Ovary (tissue), 10 donors: ENCODE measurements at regions of chr22 and their contacts with region 1.

Region 1: GRCh38 chr22:38347897-38348750 is 30.9 kb upstream of the CSNK1E start:
- DNase-seq: peak in 1 of 5 donors; percentile 19
- H3K4me3 ChIP-seq: no peak overlapping the region
- H3K27ac ChIP-seq: no peak overlapping the region
- H3K4me1 ChIP-seq: no peaks in the 10 kb centered on the region
- H3K27me3 ChIP-seq: no peaks in the 10 kb centered on the region
- CTCF ChIP-seq: no peak
- EP300 ChIP-seq: no peak
- POLR2A ChIP-seq: no peak

Region 2: GRCh38 chr22:37109242-37109917 is 1238.7 kb before region 1 on chr22 and contains the start of gene TMPRSS6:
- intact Hi-C with region 1: no loop called
- DNase-seq: no peak
- H3K4me3 ChIP-seq: no peak within 1 kb of the TSS
- H3K27ac ChIP-seq: no peak within 1 kb of the TSS
- H3K4me1 ChIP-seq: no peaks in the 10 kb centered on the region
- H3K27me3 ChIP-seq: no peaks in the 10 kb centered on the region
- CTCF ChIP-seq: no peak
- EP300 ChIP-seq: no peak
- POLR2A ChIP-seq: no peak
- total RNA-seq, gene TMPRSS6: 0.33 to 2.4 TPM in 2 of 7 donors, not detected in the others

Region 3: DNA sequence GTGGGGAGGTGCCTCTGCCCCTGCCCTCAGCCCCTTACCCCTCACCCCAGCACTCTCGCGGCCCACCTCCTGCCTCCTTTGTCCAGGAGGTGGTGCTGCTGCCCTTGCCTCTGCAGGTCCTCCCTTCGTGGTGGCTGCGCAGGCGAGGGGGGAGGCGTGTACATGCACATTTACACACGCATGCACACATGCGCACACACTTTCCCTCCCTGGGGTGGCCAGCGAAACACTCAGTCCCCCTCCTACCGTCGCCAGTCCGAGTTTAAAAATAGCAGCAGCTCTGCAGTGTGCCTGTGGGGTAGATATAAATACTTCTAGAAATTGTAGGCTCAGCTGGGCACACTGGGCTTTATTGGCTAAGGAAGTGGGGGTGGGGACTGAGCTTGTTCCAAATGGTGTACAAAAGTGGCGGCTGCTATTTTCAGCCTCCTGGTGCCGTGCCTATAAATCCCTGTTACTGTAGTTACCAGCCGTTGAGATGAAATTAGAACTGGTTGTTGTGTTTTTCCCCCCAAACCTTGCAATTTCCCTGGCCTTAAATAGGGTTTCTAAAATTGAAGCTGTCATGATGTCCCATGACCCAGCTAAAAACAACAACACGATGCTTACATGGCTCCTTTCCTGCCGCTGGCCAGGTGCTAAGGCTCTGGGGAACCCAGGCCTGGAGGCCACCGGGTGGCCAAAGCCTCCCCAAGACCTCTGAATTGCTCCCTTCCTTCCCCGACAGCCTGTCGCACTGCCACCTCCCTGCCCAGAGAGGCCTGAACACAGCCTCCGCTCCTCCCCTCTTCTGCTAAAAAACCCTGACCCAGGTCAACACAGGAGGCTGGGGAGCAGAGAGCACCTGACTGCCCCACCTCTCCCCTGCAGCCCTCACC is 278.5 kb before region 1 on chr22:
- intact Hi-C with region 1: loop called in 1 of 4 experiments (anchors 10 kb)
- DNase-seq: peak in 3 of 5 donors; percentile 48 to 62 (median 52)
- H3K4me3 ChIP-seq: no peak overlapping the region
- H3K27ac ChIP-seq: peak overlapping the region in 1 of 2 donors; percentile 50
- H3K4me1 ChIP-seq: no peaks in the 10 kb centered on the region
- H3K27me3 ChIP-seq: no peaks in the 10 kb centered on the region
- CTCF ChIP-seq: peak in 1 of 3 donors; percentile 20
- EP300 ChIP-seq: no peak
- POLR2A ChIP-seq: no peak

Region 4: GRCh38 chr22:38181453-38182247 is 166.5 kb before region 1 on chr22 and contains the start of gene PLA2G6:
- intact Hi-C with region 1: no loop called
- DNase-seq: peak; percentile 99
- H3K4me3 ChIP-seq: peak within 1 kb of the TSS; percentile 60
- H3K27ac ChIP-seq: peak within 1 kb of the TSS; percentile 64 to 86
- H3K4me1 ChIP-seq: peaks cover 13% of the 10 kb centered on the region
- H3K27me3 ChIP-seq: no peaks in the 10 kb centered on the region
- CTCF ChIP-seq: no peak
- EP300 ChIP-seq: no peak
- POLR2A ChIP-seq: peak; percentile 55
- total RNA-seq, gene PLA2G6: 22.5 to 60.5 (median 39.4) TPM

Region 5: DNA sequence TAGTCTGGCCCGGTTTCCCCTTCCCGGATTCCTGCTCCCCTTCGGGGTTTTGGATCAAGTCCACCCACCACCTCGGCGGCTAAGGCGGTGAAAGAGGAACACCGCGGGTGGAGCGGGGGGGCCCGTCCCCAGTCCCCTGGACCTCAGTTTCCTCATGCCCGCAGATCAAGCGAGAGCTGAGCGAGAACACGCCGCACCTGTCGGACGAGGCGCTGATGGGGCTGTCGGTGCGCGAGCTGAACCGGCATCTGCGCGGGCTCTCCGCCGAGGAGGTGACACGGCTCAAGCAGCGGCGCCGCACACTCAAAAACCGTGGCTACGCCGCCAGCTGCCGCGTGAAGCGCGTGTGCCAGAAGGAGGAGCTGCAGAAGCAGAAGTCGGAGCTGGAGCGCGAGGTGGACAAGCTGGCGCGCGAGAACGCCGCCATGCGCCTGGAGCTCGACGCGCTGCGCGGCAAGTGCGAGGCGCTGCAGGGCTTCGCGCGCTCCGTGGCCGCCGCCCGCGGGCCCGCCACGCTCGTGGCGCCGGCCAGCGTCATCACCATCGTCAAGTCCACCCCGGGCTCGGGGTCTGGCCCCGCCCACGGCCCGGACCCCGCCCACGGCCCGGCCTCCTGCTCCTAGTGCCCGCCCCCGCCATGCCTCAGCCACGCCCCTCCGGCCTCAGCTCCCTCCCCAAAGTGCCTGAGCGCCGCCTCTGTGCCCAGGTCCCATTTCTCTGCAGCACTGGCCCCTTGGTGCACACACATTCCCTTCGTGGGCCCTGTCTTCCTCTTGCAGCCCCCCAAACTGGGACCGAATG is 133.7 kb before region 1 on chr22:
- intact Hi-C with region 1: no loop called
- DNase-seq: peak; percentile 69 to 81 (median 74)
- H3K4me3 ChIP-seq: no peak overlapping the region
- H3K27ac ChIP-seq: peak overlapping the region; percentile 37 to 40
- H3K4me1 ChIP-seq: peaks cover 13% of the 10 kb centered on the region
- H3K27me3 ChIP-seq: no peaks in the 10 kb centered on the region
- CTCF ChIP-seq: peak in 2 of 3 donors; percentile 6 to 31
- EP300 ChIP-seq: no peak
- POLR2A ChIP-seq: no peak